ENCODE measurements at regions of chr11 and their contacts with region 1.

Region 1: DNA sequence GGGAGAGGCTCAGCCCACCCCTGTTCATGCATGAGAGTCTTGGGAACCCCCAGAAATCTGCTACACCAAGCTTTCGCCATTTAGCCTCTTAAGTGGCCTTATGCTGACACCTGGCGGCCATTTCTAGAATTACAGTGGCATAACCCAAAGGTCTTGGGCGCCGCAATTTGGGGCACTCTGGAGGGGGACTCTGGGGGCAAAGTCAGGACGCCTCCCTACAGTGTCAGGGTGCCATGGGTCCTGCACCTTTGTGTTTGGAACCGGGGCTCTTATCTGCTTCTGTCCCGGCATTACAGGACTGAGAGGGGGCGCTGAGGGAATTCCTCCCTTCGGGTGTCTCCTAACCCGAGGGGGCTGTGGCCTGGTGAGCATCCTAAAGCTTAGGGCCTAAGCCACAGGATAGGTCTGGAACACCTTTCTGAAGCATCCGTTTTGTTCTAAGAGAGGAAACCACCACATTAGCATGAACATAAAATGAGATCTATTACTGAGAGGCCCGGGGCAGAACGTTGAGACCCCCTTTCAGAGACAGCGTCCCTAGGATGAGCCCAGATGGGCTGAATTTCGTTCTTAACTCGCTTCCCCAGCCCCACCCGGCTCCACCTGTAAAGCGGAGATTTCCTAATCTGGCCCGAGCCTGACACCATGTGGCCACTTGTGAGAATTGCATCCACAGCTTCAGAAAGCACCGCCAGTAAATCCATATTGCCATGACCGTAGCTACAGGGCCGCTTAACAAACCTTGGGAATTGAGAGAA is 9.3 kb downstream of the INS start:
- DNase-seq: no peak
- H3K4me3 ChIP-seq: no peak overlapping the region
- CTCF ChIP-seq: peak; percentile 80

Region 2: DNA sequence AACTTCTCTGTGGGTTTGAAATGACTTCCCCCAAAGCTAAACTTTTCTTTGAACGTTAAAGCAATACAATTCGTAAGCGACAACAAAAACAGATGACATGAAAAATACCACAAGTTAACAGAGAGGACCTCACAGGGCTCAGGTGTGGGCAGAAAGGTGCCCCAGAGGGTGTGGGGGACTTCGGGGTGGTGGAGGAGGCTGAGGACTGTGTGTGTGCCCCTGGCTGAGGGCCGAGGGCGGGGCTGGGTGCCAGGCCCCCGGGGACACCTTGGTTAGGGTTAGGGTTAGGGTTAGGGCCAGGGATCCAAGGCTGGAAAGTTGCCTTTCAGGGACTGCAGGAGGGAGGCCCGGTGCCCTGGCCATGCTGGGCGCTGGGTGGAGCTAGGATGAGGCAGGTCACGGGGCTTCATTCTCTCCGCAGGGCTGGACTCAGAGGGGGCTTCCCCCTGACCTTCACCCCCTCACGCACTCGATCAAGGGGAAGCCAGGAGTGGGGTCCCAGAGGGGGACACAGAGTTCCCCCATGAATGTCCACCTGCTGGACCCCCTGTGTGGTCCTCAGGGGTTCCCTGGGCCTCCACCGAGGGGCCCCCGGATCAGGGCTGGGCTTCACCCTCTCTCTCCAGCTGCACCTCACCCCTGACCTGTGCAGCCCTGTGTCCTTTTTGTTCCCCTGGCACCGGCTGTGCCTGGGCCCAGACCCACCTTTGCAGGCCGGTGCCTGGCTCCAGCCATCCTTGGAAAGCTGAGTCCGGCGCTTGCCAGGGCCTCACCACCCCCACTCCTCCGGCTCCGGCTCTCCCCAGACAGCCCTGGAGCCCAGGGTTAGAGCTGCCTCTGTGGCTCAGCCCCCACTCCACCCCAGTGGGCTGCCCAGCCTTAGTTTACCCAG is 305.9 kb before region 1 on chr11:
- CTCF ChIA-PET with region 1: interaction called, 32 read pairs
- POLR2A ChIA-PET with region 1: no interaction called
- DNase-seq: no peak
- H3K4me3 ChIP-seq: no peak overlapping the region
- CTCF ChIP-seq: no peak

Region 3: DNA sequence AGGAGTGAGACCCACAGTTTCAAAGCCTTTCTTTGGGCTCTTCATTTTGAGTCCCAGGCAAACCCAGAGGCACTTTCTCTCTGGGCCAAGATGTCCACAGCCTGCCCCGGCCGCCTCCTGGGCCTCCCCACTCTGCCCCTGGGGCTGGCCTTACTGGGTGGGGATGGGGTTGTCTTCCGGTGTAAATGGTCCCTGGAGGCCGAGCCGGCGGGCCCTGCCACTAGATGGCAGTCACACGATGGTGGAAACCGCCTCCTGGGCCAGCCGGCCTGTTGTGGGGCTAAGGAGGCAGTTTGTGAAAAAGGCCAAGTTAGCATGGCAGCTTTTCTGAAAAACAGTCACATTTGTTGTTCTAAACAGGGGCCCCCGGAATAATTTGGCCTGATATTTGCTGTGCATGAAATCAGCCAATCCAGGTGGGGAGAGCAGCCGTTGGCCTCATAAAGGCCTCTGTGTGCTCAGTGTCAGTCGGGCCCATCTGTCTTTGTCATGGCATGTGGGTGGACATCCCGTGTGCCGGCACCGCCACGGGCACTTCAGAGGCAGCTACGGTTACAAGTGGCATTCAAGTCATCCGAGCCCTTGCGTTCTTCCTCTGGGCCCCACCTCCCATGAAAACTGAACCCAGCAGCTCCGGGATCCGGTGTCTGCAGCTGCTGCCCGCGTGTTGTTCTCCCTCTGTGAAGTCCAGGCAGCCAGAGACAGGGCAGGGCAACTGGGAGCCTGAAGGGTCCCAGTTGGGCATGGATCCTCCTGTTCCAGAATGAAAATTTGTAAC is 198.0 kb before region 1 on chr11:
- CTCF ChIA-PET with region 1: interaction called, 110 read pairs
- POLR2A ChIA-PET with region 1: no interaction called
- DNase-seq: no peak
- H3K4me3 ChIP-seq: no peak overlapping the region
- CTCF ChIP-seq: no peak

Region 4: DNA sequence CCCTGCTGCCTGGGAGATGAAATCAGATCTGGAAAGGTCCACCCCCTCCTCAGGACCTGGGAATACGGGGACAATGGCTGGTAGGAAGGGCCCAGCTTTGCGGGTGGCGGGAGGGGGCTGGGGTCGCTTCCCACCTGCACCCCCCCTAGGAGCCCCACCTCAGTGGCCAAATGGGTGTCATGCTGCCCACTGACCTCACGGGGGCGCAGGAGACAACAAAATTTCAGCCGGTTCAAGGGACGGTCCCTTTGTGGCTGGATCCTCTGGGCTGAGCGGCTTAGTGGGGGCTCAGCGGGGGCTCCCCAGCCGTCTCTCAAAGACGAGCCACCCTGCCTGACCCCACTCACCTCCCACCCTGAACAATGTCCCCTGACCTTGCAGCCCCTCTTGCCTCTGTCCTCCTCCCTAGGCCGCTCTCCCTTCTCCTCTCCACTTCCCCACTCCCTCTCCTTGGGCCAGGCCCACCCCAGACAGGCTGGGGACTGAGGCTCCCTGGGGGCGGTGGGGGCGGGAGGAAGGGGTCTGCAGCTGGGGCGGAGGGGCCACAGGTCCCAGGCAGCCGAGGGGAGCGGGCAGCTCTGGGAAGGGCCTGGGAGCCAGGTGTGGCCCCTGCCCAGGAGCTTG is 114.7 kb before region 1 on chr11:
- CTCF ChIA-PET with region 1: interaction called, 1,226 read pairs
- POLR2A ChIA-PET with region 1: interaction called, 5 read pairs
- DNase-seq: no peak
- H3K4me3 ChIP-seq: no peak overlapping the region
- CTCF ChIP-seq: no peak

Region 5: GRCh38 chr11:2137202-2138071 is 14.2 kb before region 1 on chr11:
- CTCF ChIA-PET with region 1: interaction called, 70 read pairs
- POLR2A ChIA-PET with region 1: no interaction called
- DNase-seq: no peak
- H3K4me3 ChIP-seq: 0 out of 2 replicates have a peak overlapping the region, but pooled peaks have one; percentile 6
- CTCF ChIP-seq: no peak

Measured in AG04449 (cell line).